ENCODE measurements at regions of chr22 and their contacts with region 1.

Region 1: GRCh38 chr22:28051787-28052356 is 132.8 kb upstream of the PITPNB start:
- DNase-seq: peak in 1 of 2 donors; percentile 69
- ATAC-seq: peak; percentile 61

Region 2: DNA sequence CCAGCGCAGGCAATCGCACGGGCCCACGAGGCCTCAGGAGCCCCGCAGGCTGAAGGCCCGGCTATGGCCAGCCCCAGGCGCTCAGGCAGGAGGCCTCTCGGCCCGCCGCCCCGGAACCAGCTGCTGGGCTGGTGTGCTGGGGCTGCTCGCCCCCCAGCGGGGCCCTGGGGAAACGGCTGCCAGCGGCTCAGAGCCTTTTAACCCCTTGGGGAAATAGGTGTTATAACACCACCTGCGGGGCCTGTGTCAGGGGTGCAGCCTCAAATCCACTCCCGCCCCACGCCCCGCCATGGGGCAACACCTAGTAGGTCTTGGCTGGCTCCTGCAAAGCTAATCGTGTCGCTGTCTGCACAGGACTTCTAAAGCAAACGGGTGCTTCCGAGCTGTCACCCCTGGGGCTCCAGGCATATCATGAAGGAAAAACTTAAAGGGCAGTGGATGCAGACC is 390.4 kb after region 1 on chr22:
- intact Hi-C with region 1: loop called in 1 of 2 experiments (anchors 10 kb)
- DNase-seq: peak; percentile 73 to 80
- ATAC-seq: peak; percentile 89